Caco-2 (cell line): ENCODE measurements at regions of chr22 and their contacts with region 1.

Region 1: GRCh38 chr22:31399211-31400028 is at the start of gene DRG1:
- DNase-seq: peak; percentile 97
- H3K4me3 ChIP-seq: peak within 1 kb of the TSS; percentile 76
- H3K4me3 Mint-ChIP-seq: peak within 1 kb of the TSS; percentile 90
- H3K27ac Mint-ChIP-seq: peak within 1 kb of the TSS; percentile 84
- H3K4me1 ChIP-seq: no peaks in the 10 kb centered on the region; the same call in 1 of the 2 replicates
- H3K4me1 Mint-ChIP-seq: no peaks in the 10 kb centered on the region
- H3K27me3 ChIP-seq: no peaks in the 10 kb centered on the region
- H3K27me3 Mint-ChIP-seq: no peaks in the 10 kb centered on the region
- CTCF ChIP-seq: no peak
- total RNA-seq, gene DRG1: 78.3 and 87.6 TPM in 2 replicates

Region 2: GRCh38 chr22:31345331-31346254 is 53.8 kb before region 1 on chr22:
- CTCF ChIA-PET with region 1: interaction called, 3 read pairs
- POLR2A ChIA-PET with region 1: interaction called, 11 read pairs
- intact Hi-C with region 1: loop called (anchors 1 kb)
- DNase-seq: peak; percentile 81 to 90
- H3K4me3 ChIP-seq: peak overlapping the region; percentile 86
- H3K4me3 Mint-ChIP-seq: peak overlapping the region; percentile 87
- H3K27ac Mint-ChIP-seq: peak overlapping the region; percentile 64
- H3K4me1 ChIP-seq: peaks cover 29% of the 10 kb centered on the region
- H3K4me1 Mint-ChIP-seq: peaks cover 21% of the 10 kb centered on the region
- H3K27me3 ChIP-seq: no peaks in the 10 kb centered on the region
- H3K27me3 Mint-ChIP-seq: no peaks in the 10 kb centered on the region
- CTCF ChIP-seq: peak; percentile 86 to 94